Naive thymus-derived CD4-positive, alpha-beta T cell (primary cell): ENCODE measurements at regions of chr18 and their contacts with region 1.

Region 1: GRCh38 chr18:23515911-23516546 is 12.7 kb downstream of the RMC1 start:
- DNase-seq: peak; percentile 39 to 76 (median 69)
- ATAC-seq: peak; percentile 99
- H3K4me3 ChIP-seq: no peak overlapping the region
- H3K4me3 Mint-ChIP-seq: no peak overlapping the region
- H3K27ac ChIP-seq: no peak overlapping the region
- H3K27ac Mint-ChIP-seq: peak overlapping the region; percentile 1 to 81 (median 66)
- H3K4me1 ChIP-seq: peaks cover 0 to 6% of the 10 kb centered on the region in 2 donors
- H3K4me1 Mint-ChIP-seq: peaks cover 7 to 37% (median 13%) of the 10 kb centered on the region in 7 donors
- H3K27me3 ChIP-seq: no peaks in the 10 kb centered on the region
- H3K27me3 Mint-ChIP-seq: no peaks in the 10 kb centered on the region

Region 2: GRCh38 chr18:23540867-23541266 is 24.8 kb after region 1 on chr18:
- CTCF ChIA-PET with region 1: interaction called, 9 read pairs
- POLR2A ChIA-PET with region 1: interaction called, 3 read pairs
- intact Hi-C with region 1: loop called in 1 of 2 experiments (anchors 2 kb)
- DNase-seq: peak in 6 of 9 donors; percentile 23 to 49 (median 36)
- ATAC-seq: peak; percentile 85
- H3K4me3 ChIP-seq: no peak overlapping the region
- H3K4me3 Mint-ChIP-seq: peak overlapping the region; percentile 52 to 81 (median 70)
- H3K27ac ChIP-seq: peak overlapping the region; percentile 44
- H3K27ac Mint-ChIP-seq: peak overlapping the region; percentile 70 to 92 (median 86)
- H3K4me1 ChIP-seq: peaks cover 11 to 37% of the 10 kb centered on the region in 2 donors
- H3K4me1 Mint-ChIP-seq: peaks cover 31 to 43% (median 41%) of the 10 kb centered on the region in 7 donors
- H3K27me3 ChIP-seq: no peaks in the 10 kb centered on the region
- H3K27me3 Mint-ChIP-seq: no peaks in the 10 kb centered on the region

Region 3: GRCh38 chr18:23703057-23703986 is 187.3 kb after region 1 on chr18:
- CTCF ChIA-PET with region 1: interaction called, 5 read pairs
- POLR2A ChIA-PET with region 1: no interaction called
- intact Hi-C with region 1: loop called (anchors 1 to 2 kb)
- DNase-seq: peak in 7 of 9 donors; percentile 18 to 62 (median 47)
- ATAC-seq: peak; percentile 77
- H3K4me3 ChIP-seq: no peak overlapping the region
- H3K4me3 Mint-ChIP-seq: no peak overlapping the region
- H3K27ac ChIP-seq: no peak overlapping the region
- H3K27ac Mint-ChIP-seq: no peak overlapping the region
- H3K4me1 ChIP-seq: no peaks in the 10 kb centered on the region
- H3K4me1 Mint-ChIP-seq: no peaks in the 10 kb centered on the region
- H3K27me3 ChIP-seq: no peaks in the 10 kb centered on the region
- H3K27me3 Mint-ChIP-seq: peaks cover 8 to 65% (median 21%) of the 10 kb centered on the region in 5 donors

Region 4: GRCh38 chr18:23918401-23919032 is 402.5 kb after region 1 on chr18:
- CTCF ChIA-PET with region 1: no interaction called
- POLR2A ChIA-PET with region 1: no interaction called
- intact Hi-C with region 1: loop called in 1 of 2 experiments (anchors 5 kb)
- DNase-seq: peak; percentile 47 to 74 (median 61)
- ATAC-seq: peak; percentile 87
- H3K4me3 ChIP-seq: no peak overlapping the region
- H3K4me3 Mint-ChIP-seq: no peak overlapping the region
- H3K27ac ChIP-seq: no peak overlapping the region
- H3K27ac Mint-ChIP-seq: peak overlapping the region in 3 of 9 donors; percentile 20 to 63 (median 62)
- H3K4me1 ChIP-seq: peaks cover 8 to 15% of the 10 kb centered on the region in 2 donors
- H3K4me1 Mint-ChIP-seq: peaks cover 10 to 31% (median 25%) of the 10 kb centered on the region in 7 donors
- H3K27me3 ChIP-seq: no peaks in the 10 kb centered on the region
- H3K27me3 Mint-ChIP-seq: peaks cover 0 to 27% (median 5%) of the 10 kb centered on the region in 5 donors